ENCODE measurements at regions of chr17 and their contacts with region 1.

Region 1: GRCh38 chr17:62692721-62693483 is 65.4 kb downstream of the MRC2 start:
- DNase-seq: no peak
- H3K4me3 ChIP-seq: no peak overlapping the region
- H3K27ac ChIP-seq: no peak overlapping the region
- H3K4me1 ChIP-seq: no peaks in the 10 kb centered on the region
- H3K27me3 ChIP-seq: no peaks in the 10 kb centered on the region
- CTCF ChIP-seq: peak in 2 of 5 experiments; percentile 15 to 18
- EP300 ChIP-seq: no peak
- POLR2A ChIP-seq: no peak

Region 2: GRCh38 chr17:62750631-62751358 is 57.9 kb after region 1 on chr17:
- in situ Hi-C with region 1: no loop called
- intact Hi-C with region 1: no loop called
- DNase-seq: no peak
- H3K4me3 ChIP-seq: no peak overlapping the region
- H3K27ac ChIP-seq: no peak overlapping the region
- H3K4me1 ChIP-seq: no peaks in the 10 kb centered on the region
- H3K27me3 ChIP-seq: no peaks in the 10 kb centered on the region
- CTCF ChIP-seq: no peak
- EP300 ChIP-seq: no peak
- POLR2A ChIP-seq: no peak

Region 3: DNA sequence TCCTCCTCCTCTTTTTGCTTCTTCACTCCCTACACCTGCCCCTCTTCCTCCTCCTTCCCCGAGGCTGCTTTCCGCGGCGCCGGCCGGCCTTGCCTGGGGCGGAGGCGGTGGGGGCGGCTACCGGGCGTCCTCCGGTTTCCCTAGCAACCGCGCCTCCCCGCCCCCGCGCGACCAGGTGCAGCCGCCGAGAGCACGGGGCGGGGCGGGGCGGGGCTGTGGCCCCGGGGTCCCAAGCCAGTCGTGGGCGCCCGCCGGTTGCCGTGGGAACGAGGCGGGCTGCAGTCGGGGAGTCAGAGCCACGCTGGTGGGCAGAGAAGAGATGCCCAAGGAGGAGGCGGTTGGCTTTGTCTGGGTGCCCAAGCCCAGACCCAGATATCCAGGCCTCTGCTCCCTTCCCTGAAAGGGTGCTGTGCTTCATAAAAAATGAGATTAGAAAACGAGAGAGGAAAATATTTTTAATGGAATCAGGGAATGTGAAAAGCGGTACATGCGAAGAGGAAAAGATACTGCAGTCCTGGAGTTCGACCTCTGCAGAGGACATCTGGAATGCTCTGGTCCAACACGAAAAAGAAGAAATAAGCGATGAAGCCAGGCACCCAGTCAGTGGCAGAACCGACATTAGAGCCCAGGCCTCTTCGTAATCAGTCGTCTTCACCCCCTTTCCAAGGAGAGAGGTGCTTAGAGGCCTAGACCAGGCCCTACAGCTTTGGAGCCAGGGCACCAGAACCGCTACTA is 115.5 kb after region 1 on chr17 and contains the start of gene MARCHF10:
- in situ Hi-C with region 1: no loop called
- intact Hi-C with region 1: loop called (anchors 5 kb)
- DNase-seq: peak; percentile 16
- H3K4me3 ChIP-seq: peak within 1 kb of the TSS in 2 of 4 donors; percentile 18 to 39
- H3K27ac ChIP-seq: no peak within 1 kb of the TSS
- H3K4me1 ChIP-seq: peaks cover 0 to 19% (median 8%) of the 10 kb centered on the region in 4 donors
- H3K27me3 ChIP-seq: peaks cover 23% of the 10 kb centered on the region
- CTCF ChIP-seq: no peak
- EP300 ChIP-seq: no peak
- POLR2A ChIP-seq: no peak
- total RNA-seq, gene MARCHF10: 2.1 TPM in 1 of 4 donors, not detected in the others

Region 4: DNA sequence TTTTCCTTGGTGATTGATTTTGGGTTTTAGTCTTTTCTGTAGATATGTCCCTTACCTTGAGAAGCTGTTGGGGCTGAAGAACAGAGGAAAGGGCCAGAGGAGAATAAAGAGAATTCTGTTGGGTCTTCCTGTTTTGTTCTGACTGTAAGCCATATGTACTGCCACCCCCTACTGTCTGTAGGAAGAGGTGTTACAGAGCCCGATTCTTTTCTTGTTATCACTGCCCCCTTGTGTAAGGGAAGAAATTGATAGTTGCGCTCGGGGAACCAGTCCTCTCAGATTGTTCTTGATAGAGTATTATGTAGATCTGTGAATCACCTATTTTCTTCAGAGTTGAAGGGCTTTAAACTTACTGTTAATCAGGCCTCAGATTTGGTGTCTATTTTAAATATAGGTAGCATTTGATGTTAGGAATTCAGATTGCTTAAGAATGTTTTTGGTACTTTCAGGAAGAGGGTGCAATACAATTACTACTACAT is 275.6 kb after region 1 on chr17:
- in situ Hi-C with region 1: no loop called
- intact Hi-C with region 1: no loop called
- DNase-seq: peak; percentile 44
- H3K4me3 ChIP-seq: no peak overlapping the region
- H3K27ac ChIP-seq: no peak overlapping the region
- H3K4me1 ChIP-seq: peaks cover 10 to 27% (median 19%) of the 10 kb centered on the region in 4 donors
- H3K27me3 ChIP-seq: peaks cover 4% of the 10 kb centered on the region
- CTCF ChIP-seq: peak; percentile 71 to 92 (median 73)
- EP300 ChIP-seq: no peak
- POLR2A ChIP-seq: no peak

Measured in transverse colon (tissue), 4 donors.